GM12878 (cell line): ENCODE measurements at regions of chr5 and their contacts with region 1.

Region 1: DNA sequence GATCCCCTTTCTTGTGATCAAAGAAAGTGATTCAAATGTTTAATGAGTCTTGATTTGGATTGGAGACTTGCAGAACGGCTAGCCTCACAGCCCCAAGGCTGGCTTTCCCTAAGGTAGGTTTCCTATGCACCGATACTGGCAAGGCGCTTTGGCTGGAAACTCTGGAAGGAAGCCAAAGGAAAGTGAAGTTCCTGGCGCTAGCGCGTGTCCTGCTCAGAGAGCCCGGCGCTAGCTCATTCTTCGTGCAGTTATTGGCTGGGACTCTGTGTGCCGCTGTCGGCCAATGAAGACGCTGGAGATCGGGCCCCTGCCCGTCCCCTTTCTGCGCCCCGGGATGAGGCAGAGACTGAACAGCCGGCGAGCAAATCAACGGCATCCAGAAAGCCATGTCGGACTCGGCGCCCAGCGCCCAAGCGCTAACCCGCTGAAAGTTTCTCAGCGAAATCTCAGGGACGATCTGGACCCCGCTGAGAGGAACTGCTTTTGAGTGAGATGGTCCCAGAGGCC is at the start of gene PCDHGC3:
- DNase-seq: peak; percentile 40
- ATAC-seq: peak; percentile 97
- H3K4me3 ChIP-seq: peak within 1 kb of the TSS; percentile 77
- H3K27ac ChIP-seq: no peak within 1 kb of the TSS; the same call in 1 of the 2 replicates
- H3K4me1 ChIP-seq: peaks cover 17% of the 10 kb centered on the region
- H3K27me3 ChIP-seq: no peaks in the 10 kb centered on the region; a peak in 1 of 4 replicates
- CTCF ChIP-seq: peak; percentile 49 to 86 (median 65); a peak in 5 of 6 replicates
- EP300 ChIP-seq: no peak
- POLR2A ChIP-seq: no peak
- RAD21 ChIP-seq: peak; percentile 77
- polyA plus RNA-seq, gene PCDHGC3: 0.53 to 0.60 TPM

Region 2: GRCh38 chr5:141412854-141413539 is 62.7 kb before region 1 on chr5 and contains the start of gene PCDHGA10:
- CTCF ChIA-PET with region 1: interaction called, 32 read pairs
- POLR2A ChIA-PET with region 1: no interaction called
- RAD21 ChIA-PET with region 1: interaction called, 15 read pairs
- SMC1A ChIA-PET with region 1: interaction called, 8 read pairs
- in situ Hi-C with region 1: no loop called
- intact Hi-C with region 1: no loop called
- DNase-seq: peak; percentile 27
- ATAC-seq: peak; percentile 89
- H3K4me3 ChIP-seq: peak within 1 kb of the TSS; percentile 76
- H3K27ac ChIP-seq: no peak within 1 kb of the TSS
- H3K4me1 ChIP-seq: no peaks in the 10 kb centered on the region; the same call in 1 of the 2 replicates
- H3K27me3 ChIP-seq: peaks cover 0 to 1% of the 10 kb centered on the region in 2 experiments; a peak in 1 of 4 replicates
- CTCF ChIP-seq: peak; percentile 81 to 86 (median 83)
- EP300 ChIP-seq: no peak
- POLR2A ChIP-seq: no peak
- RAD21 ChIP-seq: peak; percentile 86
- polyA plus RNA-seq, gene PCDHGA10: 0.58 to 0.68 TPM

Region 3: DNA sequence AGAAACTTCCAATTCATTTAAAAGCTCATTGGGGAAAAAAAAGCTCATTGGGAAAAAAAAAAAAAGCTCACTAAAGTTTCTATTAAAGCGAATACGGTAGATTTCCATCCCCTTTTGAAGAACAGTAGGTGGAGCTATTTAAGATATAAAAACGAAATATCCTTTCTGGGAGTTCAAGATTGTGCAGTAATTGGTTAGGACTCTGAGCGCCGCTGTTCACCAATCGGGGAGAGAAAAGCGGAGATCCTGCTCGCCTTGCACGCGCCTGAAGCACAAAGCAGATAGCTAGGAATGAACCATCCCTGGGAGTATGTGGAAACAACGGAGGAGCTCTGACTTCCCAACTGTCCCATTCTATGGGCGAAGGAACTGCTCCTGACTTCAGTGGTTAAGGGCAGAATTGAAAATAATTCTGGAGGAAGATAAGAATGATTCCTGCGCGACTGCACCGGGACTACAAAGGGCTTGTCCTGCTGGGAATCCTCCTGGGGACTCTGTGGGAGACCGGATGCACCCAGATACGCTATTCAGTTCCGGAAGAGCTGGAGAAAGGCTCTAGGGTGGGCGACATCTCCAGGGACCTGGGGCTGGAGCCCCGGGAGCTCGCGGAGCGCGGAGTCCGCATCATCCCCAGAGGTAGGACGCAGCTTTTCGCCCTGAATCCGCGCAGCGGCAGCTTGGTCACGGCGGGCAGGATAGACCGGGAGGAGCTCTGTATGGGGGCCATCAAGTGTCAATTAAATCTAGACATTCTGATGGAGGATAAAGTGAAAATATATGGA is 45.2 kb before region 1 on chr5 and contains the start of gene PCDHGA12:
- CTCF ChIA-PET with region 1: interaction called, 15 read pairs
- POLR2A ChIA-PET with region 1: no interaction called
- RAD21 ChIA-PET with region 1: interaction called, 3 read pairs
- SMC1A ChIA-PET with region 1: interaction called, 7 read pairs
- in situ Hi-C with region 1: no loop called
- intact Hi-C with region 1: no loop called
- DNase-seq: peak; percentile 37
- ATAC-seq: peak; percentile 96
- H3K4me3 ChIP-seq: peak within 1 kb of the TSS; percentile 22; the same call in 1 of the 2 replicates
- H3K27ac ChIP-seq: no peak within 1 kb of the TSS
- H3K4me1 ChIP-seq: no peaks in the 10 kb centered on the region; the same call in 1 of the 2 replicates
- H3K27me3 ChIP-seq: no peaks in the 10 kb centered on the region
- CTCF ChIP-seq: peak; percentile 62 to 82 (median 68)
- EP300 ChIP-seq: no peak
- POLR2A ChIP-seq: no peak
- RAD21 ChIP-seq: peak; percentile 56
- polyA plus RNA-seq, gene PCDHGA12: not detected

Region 4: GRCh38 chr5:141492168-141492885 is 16.6 kb after region 1 on chr5:
- CTCF ChIA-PET with region 1: interaction called, 23 read pairs
- POLR2A ChIA-PET with region 1: no interaction called
- RAD21 ChIA-PET with region 1: interaction called, 5 read pairs
- SMC1A ChIA-PET with region 1: interaction called, 8 read pairs
- in situ Hi-C with region 1: no loop called
- intact Hi-C with region 1: no loop called
- DNase-seq: no peak
- ATAC-seq: peak; percentile 78
- H3K4me3 ChIP-seq: peak overlapping the region; percentile 65
- H3K27ac ChIP-seq: no peak overlapping the region
- H3K4me1 ChIP-seq: peaks cover 24% of the 10 kb centered on the region
- H3K27me3 ChIP-seq: no peaks in the 10 kb centered on the region; a peak in 1 of 4 replicates
- CTCF ChIP-seq: no peak
- EP300 ChIP-seq: no peak
- POLR2A ChIP-seq: peak; percentile 76
- RAD21 ChIP-seq: no peak

Region 5: GRCh38 chr5:141524604-141525597 is 49.2 kb after region 1 on chr5:
- CTCF ChIA-PET with region 1: interaction called, 191 read pairs
- POLR2A ChIA-PET with region 1: interaction called, 4 read pairs
- RAD21 ChIA-PET with region 1: interaction called, 66 read pairs
- SMC1A ChIA-PET with region 1: interaction called, 57 read pairs
- in situ Hi-C with region 1: loop called (anchors 5 kb)
- intact Hi-C with region 1: loop called (anchors 1 kb)
- DNase-seq: no peak
- ATAC-seq: peak; percentile 91
- H3K4me3 ChIP-seq: no peak overlapping the region
- H3K27ac ChIP-seq: peak overlapping the region; percentile 9; the same call in 1 of the 2 replicates
- H3K4me1 ChIP-seq: peaks cover 26% of the 10 kb centered on the region
- H3K27me3 ChIP-seq: no peaks in the 10 kb centered on the region
- CTCF ChIP-seq: peak; percentile 98 to 100 (median 99)
- EP300 ChIP-seq: 0 out of 4 replicates have a peak, but pooled peaks of 1 of the 2 experiments have one; percentile 38
- POLR2A ChIP-seq: 0 out of 2 replicates have a peak, but pooled peaks have one; percentile 34
- RAD21 ChIP-seq: peak; percentile 73